ENCODE measurements at regions of chr9 and their contacts with region 1.

Region 1: DNA sequence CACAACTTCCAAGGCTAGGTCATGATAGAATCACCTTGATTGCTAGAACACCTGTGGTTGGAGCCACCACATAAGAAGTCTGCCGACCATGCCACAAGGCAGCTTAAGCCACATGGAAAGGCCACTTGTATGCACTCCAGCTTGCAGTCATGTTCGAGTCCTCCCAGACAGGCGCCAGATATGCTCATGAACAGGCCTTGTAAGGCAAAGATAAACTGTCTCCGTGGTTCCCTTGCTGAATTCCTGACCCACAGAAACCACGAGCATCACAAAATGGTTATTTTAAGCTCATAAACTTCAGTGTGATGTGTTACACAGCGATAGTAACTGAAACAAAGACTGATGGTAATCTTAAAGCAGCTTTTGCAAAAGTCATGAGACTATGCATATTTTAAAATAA is 188.4 kb upstream of the DAPK1 start:
- DNase-seq: no peak
- H3K4me3 ChIP-seq: no peak overlapping the region
- H3K4me3 Mint-ChIP-seq: no peak overlapping the region
- H3K27ac ChIP-seq: no peak overlapping the region
- H3K27ac Mint-ChIP-seq: no peak overlapping the region
- H3K4me1 ChIP-seq: no peaks in the 10 kb centered on the region
- H3K4me1 Mint-ChIP-seq: no peaks in the 10 kb centered on the region
- H3K27me3 ChIP-seq: no peaks in the 10 kb centered on the region
- H3K27me3 Mint-ChIP-seq: peaks cover 6 to 20% (median 10%) of the 10 kb centered on the region in 3 donors
- CTCF ChIP-seq: no peak

Region 2: GRCh38 chr9:86637515-86637914 is 671.7 kb before region 1 on chr9:
- intact Hi-C with region 1: loop called in 1 of 2 experiments (anchors 5 kb)
- DNase-seq: peak in 1 of 3 donors; percentile 12
- H3K4me3 ChIP-seq: no peak overlapping the region
- H3K4me3 Mint-ChIP-seq: peak overlapping the region in 1 of 2 donors; percentile 58
- H3K27ac ChIP-seq: no peak overlapping the region
- H3K27ac Mint-ChIP-seq: peak overlapping the region in 1 of 7 donors; percentile 47
- H3K4me1 ChIP-seq: no peaks in the 10 kb centered on the region
- H3K4me1 Mint-ChIP-seq: no peaks in the 10 kb centered on the region
- H3K27me3 ChIP-seq: peaks cover 0 to 9% of the 10 kb centered on the region in 2 donors
- H3K27me3 Mint-ChIP-seq: peaks cover 0 to 13% (median 8%) of the 10 kb centered on the region in 3 donors
- CTCF ChIP-seq: peak; percentile 63

Region 3: DNA sequence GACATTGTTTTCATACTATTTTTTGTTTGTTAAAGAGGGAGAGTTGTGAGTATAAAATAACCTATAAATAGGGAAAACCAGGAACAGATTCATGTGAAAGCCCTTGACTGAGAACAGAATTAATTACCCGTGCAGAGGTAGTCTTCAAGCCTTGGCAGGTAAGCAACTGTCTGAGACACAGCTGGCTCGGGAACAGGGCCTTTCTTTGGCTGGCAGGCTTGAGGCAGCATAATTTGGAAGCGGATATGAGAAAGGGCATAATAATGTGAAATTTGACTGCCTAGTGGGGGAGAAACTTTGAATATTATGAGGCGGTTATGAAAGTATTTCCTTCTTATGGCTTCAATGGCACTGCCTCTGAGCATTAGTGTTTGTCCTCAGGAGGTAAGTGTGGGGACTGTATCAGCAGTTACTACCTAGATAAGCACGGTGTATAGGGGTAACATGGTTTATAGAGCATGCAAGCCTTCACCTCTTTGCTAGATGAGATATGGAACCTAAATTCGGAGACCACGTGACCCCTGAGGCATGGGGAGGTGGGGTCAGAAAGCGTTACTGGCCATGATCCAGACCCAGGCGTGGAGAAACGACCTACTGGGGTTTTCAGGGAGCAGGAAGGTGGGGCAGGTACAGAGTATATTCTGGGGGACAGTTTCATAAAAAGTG is 151.7 kb before region 1 on chr9:
- intact Hi-C with region 1: no loop called
- DNase-seq: no peak
- H3K4me3 ChIP-seq: no peak overlapping the region
- H3K4me3 Mint-ChIP-seq: no peak overlapping the region
- H3K27ac ChIP-seq: no peak overlapping the region
- H3K27ac Mint-ChIP-seq: no peak overlapping the region
- H3K4me1 ChIP-seq: no peaks in the 10 kb centered on the region
- H3K4me1 Mint-ChIP-seq: no peaks in the 10 kb centered on the region
- H3K27me3 ChIP-seq: no peaks in the 10 kb centered on the region
- H3K27me3 Mint-ChIP-seq: peaks cover 0 to 4% (median 3%) of the 10 kb centered on the region in 3 donors
- CTCF ChIP-seq: no peak

Region 4: DNA sequence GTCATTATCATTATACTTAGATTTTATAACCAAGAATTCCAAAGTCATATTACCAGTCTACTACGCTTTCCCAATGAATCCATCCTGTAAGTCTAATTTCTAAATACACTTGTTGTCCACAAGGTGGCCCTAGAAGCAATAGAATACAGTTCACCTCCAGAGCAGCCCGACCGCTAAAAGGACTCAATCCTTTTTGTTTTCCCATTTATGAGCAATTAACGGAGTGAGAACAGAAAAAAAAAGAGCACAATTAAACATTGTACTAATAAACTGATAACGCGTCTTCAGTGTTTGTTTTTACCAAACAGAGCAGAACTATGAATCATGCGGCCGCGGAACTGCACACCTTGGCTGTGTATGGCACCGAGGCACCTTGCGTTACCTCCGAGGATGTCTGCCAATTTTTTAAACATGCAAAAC is 27.7 kb after region 1 on chr9:
- intact Hi-C with region 1: no loop called
- DNase-seq: peak; percentile 50 to 70 (median 65)
- H3K4me3 ChIP-seq: peak overlapping the region in 1 of 3 experiments; percentile 21
- H3K4me3 Mint-ChIP-seq: peak overlapping the region; percentile 54 to 91
- H3K27ac ChIP-seq: no peak overlapping the region
- H3K27ac Mint-ChIP-seq: no peak overlapping the region
- H3K4me1 ChIP-seq: peaks cover 6 to 7% of the 10 kb centered on the region in 2 donors
- H3K4me1 Mint-ChIP-seq: peaks cover 12% of the 10 kb centered on the region
- H3K27me3 ChIP-seq: peaks cover 18 to 21% of the 10 kb centered on the region in 2 donors
- H3K27me3 Mint-ChIP-seq: peaks cover 19 to 30% (median 30%) of the 10 kb centered on the region in 3 donors
- CTCF ChIP-seq: peak; percentile 86